Activated CD8-positive, alpha-beta T cell treated with anti-CD3 and anti-CD28 coated beads for 36 hours (primary cell): ENCODE measurements at regions of chr12 and their contacts with region 1.

Region 1: GRCh38 chr12:25436203-25437030 is 116.7 kb downstream of the LMNTD1 start:
- DNase-seq: peak; percentile 32
- ATAC-seq: peak; percentile 67
- H3K4me3 Mint-ChIP-seq: peak overlapping the region; percentile 35
- H3K27ac Mint-ChIP-seq: no peak overlapping the region
- H3K4me1 Mint-ChIP-seq: peaks cover 5% of the 10 kb centered on the region
- H3K27me3 Mint-ChIP-seq: no peaks in the 10 kb centered on the region
- CTCF ChIP-seq: peak; percentile 77

Region 2: DNA sequence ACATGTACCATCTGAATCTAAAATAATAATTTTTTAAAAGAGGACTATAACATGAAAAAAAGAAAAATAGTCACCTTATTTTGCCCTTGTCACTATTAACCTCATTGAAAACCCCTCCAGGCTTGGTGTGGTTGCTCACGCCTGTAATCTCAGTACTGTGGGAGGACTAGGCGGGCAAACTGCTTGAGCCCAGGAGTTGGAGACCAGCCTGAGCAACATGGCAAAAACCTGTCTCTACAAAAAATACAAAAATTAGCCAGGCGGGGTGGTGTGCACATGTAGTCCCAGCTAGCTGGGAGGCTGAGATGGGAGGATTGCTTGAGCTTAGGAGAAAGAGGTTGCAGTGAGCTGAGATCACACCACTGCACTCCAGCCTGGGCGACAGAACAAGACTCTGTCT is 59.4 kb before region 1 on chr12:
- CTCF ChIA-PET with region 1: no interaction called
- POLR2A ChIA-PET with region 1: no interaction called
- intact Hi-C with region 1: no loop called
- DNase-seq: peak; percentile 34
- ATAC-seq: peak; percentile 18
- H3K4me3 Mint-ChIP-seq: peak overlapping the region; percentile 36
- H3K27ac Mint-ChIP-seq: peak overlapping the region; percentile 84
- H3K4me1 Mint-ChIP-seq: peaks cover 60% of the 10 kb centered on the region
- H3K27me3 Mint-ChIP-seq: no peaks in the 10 kb centered on the region
- CTCF ChIP-seq: no peak

Region 3: DNA sequence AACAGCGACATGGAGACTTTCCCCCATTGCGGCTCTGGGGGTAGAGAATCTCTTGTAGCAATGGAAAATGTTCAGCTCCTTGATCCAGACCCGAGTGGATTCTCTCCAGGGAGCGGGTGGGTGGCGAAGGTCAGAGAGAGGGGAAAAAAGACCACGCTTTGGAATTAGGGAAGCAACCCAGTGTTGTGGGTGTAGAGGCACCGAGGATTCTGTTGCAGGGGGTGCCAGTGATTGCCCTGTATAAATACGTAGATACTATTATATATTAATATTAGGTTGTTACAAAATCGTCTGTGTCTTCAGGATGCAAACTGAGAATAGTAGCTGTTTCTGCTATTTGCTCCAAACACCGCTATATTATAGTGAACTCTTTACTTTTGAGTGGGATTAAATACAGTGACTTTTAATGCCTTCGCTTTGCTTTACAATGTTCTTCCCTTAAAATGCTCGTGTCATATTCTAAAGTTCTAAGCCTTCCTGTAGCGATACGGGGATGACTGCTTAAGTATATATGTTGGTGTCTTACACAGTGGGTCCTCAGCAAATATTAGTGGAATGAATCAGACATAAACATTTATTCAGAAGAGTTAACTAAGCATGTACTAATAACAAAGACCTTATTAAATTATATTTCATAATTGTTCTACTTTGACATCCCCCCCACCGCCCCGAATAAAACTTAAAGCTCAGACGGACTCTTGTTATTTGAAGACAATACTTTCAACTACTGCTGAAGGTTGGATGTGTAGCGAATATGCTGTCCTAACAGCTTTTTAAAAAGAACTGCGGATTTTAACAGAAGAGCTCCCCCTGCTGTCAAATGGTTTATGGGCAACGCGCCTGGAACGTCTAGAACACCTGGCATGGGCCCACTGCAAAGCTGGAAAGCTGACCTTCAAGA is 49.3 kb before region 1 on chr12:
- CTCF ChIA-PET with region 1: no interaction called
- POLR2A ChIA-PET with region 1: no interaction called
- intact Hi-C with region 1: no loop called
- DNase-seq: peak; percentile 85
- ATAC-seq: peak; percentile 21
- H3K4me3 Mint-ChIP-seq: peak overlapping the region; percentile 89
- H3K27ac Mint-ChIP-seq: peak overlapping the region; percentile 99
- H3K4me1 Mint-ChIP-seq: peaks cover 43% of the 10 kb centered on the region
- H3K27me3 Mint-ChIP-seq: peaks cover 2% of the 10 kb centered on the region
- CTCF ChIP-seq: peak; percentile 79

Region 4: DNA sequence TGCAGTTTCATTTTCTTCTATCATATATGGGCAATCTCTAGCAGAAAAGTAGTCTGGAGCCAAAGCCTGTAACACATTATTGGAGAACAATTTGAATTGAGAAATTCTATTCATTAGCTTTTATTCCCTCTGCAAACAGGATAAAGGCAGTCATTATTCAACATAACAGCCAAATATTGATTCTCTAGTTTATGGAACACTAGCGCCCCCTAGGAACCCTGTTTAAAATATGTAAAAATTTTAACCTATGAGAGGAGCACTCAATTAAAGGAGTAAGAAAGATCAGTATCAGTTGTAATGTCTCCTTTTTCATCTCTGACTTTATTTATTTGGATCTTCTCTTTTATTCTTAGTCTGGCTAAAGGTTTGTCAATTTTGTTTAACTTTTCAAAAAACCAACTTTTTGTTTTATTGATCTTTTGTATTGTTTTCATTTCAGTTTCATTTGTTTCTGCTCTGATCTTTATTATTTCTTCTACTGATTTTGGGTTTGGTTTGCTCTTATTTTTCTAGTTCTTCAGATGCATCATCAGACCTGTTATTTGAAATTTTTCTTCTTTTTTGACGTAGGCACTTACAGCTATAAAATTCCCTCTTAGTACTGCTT is 121.5 kb after region 1 on chr12:
- CTCF ChIA-PET with region 1: no interaction called
- POLR2A ChIA-PET with region 1: no interaction called
- intact Hi-C with region 1: loop called (anchors 10 kb)
- DNase-seq: peak; percentile 44
- ATAC-seq: no peak
- H3K4me3 Mint-ChIP-seq: no peak overlapping the region
- H3K27ac Mint-ChIP-seq: no peak overlapping the region
- H3K4me1 Mint-ChIP-seq: peaks cover 4% of the 10 kb centered on the region
- H3K27me3 Mint-ChIP-seq: no peaks in the 10 kb centered on the region
- CTCF ChIP-seq: peak; percentile 51

Region 5: DNA sequence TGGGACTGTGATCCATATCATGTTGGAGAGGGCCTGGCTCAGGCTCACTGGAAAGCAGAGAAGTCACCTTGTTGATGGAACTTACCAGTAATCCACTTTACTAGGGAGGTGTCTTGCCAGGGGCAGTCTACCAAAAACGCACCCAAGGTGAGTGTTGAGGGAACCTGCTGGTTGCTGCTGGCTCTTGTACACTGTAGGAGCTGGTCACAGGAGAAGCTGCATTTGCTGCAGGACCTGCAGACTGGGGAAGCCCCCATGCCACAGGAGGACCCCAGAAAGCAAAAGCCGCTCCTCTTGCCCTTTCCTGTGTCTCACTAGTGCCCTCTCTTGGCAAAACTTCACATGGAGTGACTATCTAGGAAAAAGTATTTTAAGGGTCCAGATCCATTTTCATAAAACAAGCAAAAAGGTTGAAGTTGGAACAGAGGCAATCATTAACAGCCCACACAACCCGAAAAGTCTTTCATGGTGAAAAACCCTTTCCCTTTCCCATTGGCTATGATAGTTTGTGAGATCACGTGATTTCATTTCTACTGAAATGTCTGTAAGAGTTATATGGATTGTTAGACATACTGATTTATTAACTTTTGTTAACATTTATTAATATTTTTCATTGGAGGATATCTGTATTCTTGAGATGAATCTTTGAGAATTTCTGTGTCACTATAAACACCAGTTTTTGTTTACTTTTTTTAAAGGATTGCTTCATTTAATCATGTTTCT is 581.2 kb after region 1 on chr12:
- CTCF ChIA-PET with region 1: interaction called, 10 read pairs
- POLR2A ChIA-PET with region 1: no interaction called
- intact Hi-C with region 1: no loop called
- DNase-seq: peak; percentile 30
- ATAC-seq: no peak
- H3K4me3 Mint-ChIP-seq: no peak overlapping the region
- H3K27ac Mint-ChIP-seq: no peak overlapping the region
- H3K4me1 Mint-ChIP-seq: no peaks in the 10 kb centered on the region
- H3K27me3 Mint-ChIP-seq: peaks cover 5% of the 10 kb centered on the region
- CTCF ChIP-seq: peak; percentile 43

Region 6: GRCh38 chr12:26028953-26029735 is 592.7 kb after region 1 on chr12:
- CTCF ChIA-PET with region 1: interaction called, 10 read pairs
- POLR2A ChIA-PET with region 1: no interaction called
- intact Hi-C with region 1: loop called (anchors 5 kb)
- DNase-seq: peak; percentile 39
- ATAC-seq: peak; percentile 30
- H3K4me3 Mint-ChIP-seq: no peak overlapping the region
- H3K27ac Mint-ChIP-seq: no peak overlapping the region
- H3K4me1 Mint-ChIP-seq: no peaks in the 10 kb centered on the region
- H3K27me3 Mint-ChIP-seq: peaks cover 1% of the 10 kb centered on the region
- CTCF ChIP-seq: peak; percentile 76